Activated CD8-positive, alpha-beta T cell treated with anti-CD3 and anti-CD28 coated beads, Interleukin-2, amount 10 ng/mL, durations not matched to agents 7 days and 5 days (primary cell): ENCODE measurements at regions of chr4 and their contacts with region 1.

Region 1: GRCh38 chr4:26330186-26330787 is 9.5 kb downstream of the RBPJ start:
- DNase-seq: peak; percentile 37
- ATAC-seq: peak; percentile 71
- H3K4me3 Mint-ChIP-seq: no peak overlapping the region
- H3K27ac Mint-ChIP-seq: no peak overlapping the region
- H3K4me1 Mint-ChIP-seq: peaks cover 34% of the 10 kb centered on the region
- H3K27me3 Mint-ChIP-seq: no peaks in the 10 kb centered on the region

Region 2: GRCh38 chr4:25986807-25987206 is 343.5 kb before region 1 on chr4:
- CTCF ChIA-PET with region 1: interaction called, 24 read pairs
- POLR2A ChIA-PET with region 1: no interaction called
- DNase-seq: no peak
- ATAC-seq: no peak
- H3K4me3 Mint-ChIP-seq: no peak overlapping the region
- H3K27ac Mint-ChIP-seq: no peak overlapping the region
- H3K4me1 Mint-ChIP-seq: peaks cover 12% of the 10 kb centered on the region
- H3K27me3 Mint-ChIP-seq: peaks cover 8% of the 10 kb centered on the region

Region 3: DNA sequence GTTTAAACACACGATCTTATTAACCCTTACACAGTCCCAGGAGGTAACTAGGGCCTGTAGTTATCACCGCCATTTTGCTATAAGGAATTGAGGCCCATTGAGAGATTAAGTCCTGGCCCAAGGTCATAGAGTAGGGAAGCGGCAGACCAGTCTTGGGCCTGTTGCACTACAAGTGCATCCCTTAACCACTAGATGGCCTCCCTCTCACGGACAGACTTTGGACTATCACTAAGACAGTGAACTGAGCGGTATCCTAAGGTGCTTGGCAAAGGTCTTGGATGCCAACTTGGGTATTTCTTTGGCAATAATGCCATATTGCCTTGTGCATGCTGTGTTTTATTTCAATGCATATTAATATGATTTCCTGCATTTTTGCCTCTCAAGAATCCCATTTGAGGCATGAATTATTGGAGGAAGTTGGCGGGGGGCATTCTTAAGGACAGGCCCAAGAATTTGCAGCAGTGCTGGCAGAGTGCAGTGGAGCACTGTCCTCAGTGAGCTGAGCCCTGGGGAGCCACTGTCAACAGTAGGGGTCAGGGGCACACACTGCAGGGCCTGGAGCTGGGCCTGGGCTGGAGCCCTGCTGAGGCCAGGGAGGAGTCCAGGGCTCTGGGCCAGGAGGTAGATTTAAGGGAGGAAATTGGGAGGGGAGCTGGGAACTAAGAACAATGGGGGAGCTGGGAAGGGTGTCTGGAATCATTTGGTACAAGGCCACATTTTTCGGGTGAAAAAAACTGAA is 268.9 kb before region 1 on chr4:
- CTCF ChIA-PET with region 1: interaction called, 48 read pairs
- POLR2A ChIA-PET with region 1: no interaction called
- DNase-seq: peak; percentile 51
- ATAC-seq: peak; percentile 78
- H3K4me3 Mint-ChIP-seq: no peak overlapping the region
- H3K27ac Mint-ChIP-seq: no peak overlapping the region
- H3K4me1 Mint-ChIP-seq: peaks cover 10% of the 10 kb centered on the region
- H3K27me3 Mint-ChIP-seq: peaks cover 7% of the 10 kb centered on the region

Region 4: DNA sequence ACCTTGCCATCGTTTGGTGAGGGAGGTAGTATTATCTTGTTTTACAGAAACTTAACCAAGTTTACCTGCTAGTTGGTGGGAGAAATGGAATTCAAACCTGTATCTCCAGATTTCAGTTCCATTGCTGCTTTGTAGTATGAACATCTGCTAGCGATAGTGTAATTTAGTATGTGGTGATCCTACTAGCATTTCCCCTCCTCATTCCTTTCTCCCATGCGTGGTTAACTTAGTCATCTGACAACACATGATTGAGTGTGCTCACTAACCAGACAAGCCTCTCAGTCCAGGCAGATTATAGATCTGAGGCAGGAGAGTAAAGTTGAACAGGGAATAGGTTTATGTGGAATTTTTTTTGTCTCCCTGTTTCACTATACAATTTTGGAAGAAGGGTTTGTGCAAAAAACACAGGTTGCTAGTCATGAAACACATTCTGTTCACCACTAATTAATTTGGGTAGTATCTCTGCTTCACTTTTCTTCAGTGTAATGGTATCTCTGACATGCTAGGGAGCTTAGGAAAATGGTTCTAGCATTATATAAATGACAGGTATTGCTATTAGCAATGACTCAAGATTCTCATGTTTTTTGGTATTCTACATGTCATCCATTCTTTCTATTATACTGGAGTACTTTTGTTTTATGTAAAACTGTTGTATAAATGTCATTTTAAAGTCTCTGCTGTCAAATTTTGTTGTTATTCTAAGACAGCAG is 12.2 kb after region 1 on chr4:
- CTCF ChIA-PET with region 1: interaction called, 21 read pairs
- POLR2A ChIA-PET with region 1: no interaction called
- DNase-seq: no peak
- ATAC-seq: no peak
- H3K4me3 Mint-ChIP-seq: no peak overlapping the region
- H3K27ac Mint-ChIP-seq: no peak overlapping the region
- H3K4me1 Mint-ChIP-seq: peaks cover 23% of the 10 kb centered on the region
- H3K27me3 Mint-ChIP-seq: no peaks in the 10 kb centered on the region

Region 5: DNA sequence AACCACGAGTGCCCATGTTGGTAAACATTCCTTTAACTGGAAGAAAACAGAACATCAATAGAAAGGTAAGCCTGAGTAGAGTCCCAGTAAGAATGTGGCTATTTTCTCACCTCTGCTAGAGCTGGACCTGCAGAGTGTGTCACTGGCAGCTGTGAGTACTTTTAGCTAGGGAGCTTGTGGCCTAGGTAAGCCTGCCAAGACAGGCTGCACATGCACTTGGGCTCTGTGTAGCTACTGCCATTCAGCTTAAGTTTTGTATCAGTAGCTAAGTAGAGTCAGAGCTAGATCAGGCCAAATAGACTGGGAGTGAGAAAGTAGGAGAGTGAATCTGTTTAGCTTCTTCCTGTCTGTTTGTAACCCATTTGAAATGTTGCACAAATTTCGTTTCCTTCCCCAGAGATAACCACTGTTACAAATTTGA is 25.8 kb after region 1 on chr4:
- CTCF ChIA-PET with region 1: interaction called, 20 read pairs
- POLR2A ChIA-PET with region 1: no interaction called
- DNase-seq: no peak
- ATAC-seq: peak; percentile 67
- H3K4me3 Mint-ChIP-seq: no peak overlapping the region
- H3K27ac Mint-ChIP-seq: no peak overlapping the region
- H3K4me1 Mint-ChIP-seq: peaks cover 8% of the 10 kb centered on the region
- H3K27me3 Mint-ChIP-seq: no peaks in the 10 kb centered on the region

Region 6: GRCh38 chr4:26372525-26373172 is 42.4 kb after region 1 on chr4:
- CTCF ChIA-PET with region 1: interaction called, 14 read pairs
- POLR2A ChIA-PET with region 1: no interaction called
- DNase-seq: peak; percentile 78
- ATAC-seq: peak; percentile 89
- H3K4me3 Mint-ChIP-seq: no peak overlapping the region
- H3K27ac Mint-ChIP-seq: peak overlapping the region; percentile 45
- H3K4me1 Mint-ChIP-seq: peaks cover 36% of the 10 kb centered on the region
- H3K27me3 Mint-ChIP-seq: no peaks in the 10 kb centered on the region

Region 7: GRCh38 chr4:26402458-26402857 is 72.2 kb after region 1 on chr4:
- CTCF ChIA-PET with region 1: interaction called, 204 read pairs
- POLR2A ChIA-PET with region 1: no interaction called
- DNase-seq: no peak
- ATAC-seq: no peak
- H3K4me3 Mint-ChIP-seq: no peak overlapping the region
- H3K27ac Mint-ChIP-seq: no peak overlapping the region
- H3K4me1 Mint-ChIP-seq: peaks cover 25% of the 10 kb centered on the region
- H3K27me3 Mint-ChIP-seq: no peaks in the 10 kb centered on the region